ENCODE measurements at regions of chr13 and their contacts with region 1.

Region 1: GRCh38 chr13:110301606-110302553 is 5.1 kb downstream of the COL4A1 start:
- DNase-seq: peak in 1 of 2 donors; percentile 66
- H3K4me3 ChIP-seq: peak overlapping the region; percentile 2 to 84
- H3K27ac ChIP-seq: peak overlapping the region; percentile 95 to 99
- H3K4me1 ChIP-seq: peaks cover 20 to 53% of the 10 kb centered on the region in 2 donors
- H3K27me3 ChIP-seq: no peaks in the 10 kb centered on the region
- CTCF ChIP-seq: no peak

Region 2: GRCh38 chr13:108827636-108828035 is 1474.2 kb before region 1 on chr13:
- intact Hi-C with region 1: no loop called
- DNase-seq: no peak
- H3K4me3 ChIP-seq: no peak overlapping the region
- H3K27ac ChIP-seq: no peak overlapping the region
- H3K4me1 ChIP-seq: no peaks in the 10 kb centered on the region
- H3K27me3 ChIP-seq: no peaks in the 10 kb centered on the region
- CTCF ChIP-seq: no peak

Region 3: GRCh38 chr13:109281017-109281902 is 1020.6 kb before region 1 on chr13:
- intact Hi-C with region 1: no loop called
- DNase-seq: no peak
- H3K4me3 ChIP-seq: no peak overlapping the region
- H3K27ac ChIP-seq: no peak overlapping the region
- H3K4me1 ChIP-seq: no peaks in the 10 kb centered on the region
- H3K27me3 ChIP-seq: no peaks in the 10 kb centered on the region
- CTCF ChIP-seq: no peak

Region 4: DNA sequence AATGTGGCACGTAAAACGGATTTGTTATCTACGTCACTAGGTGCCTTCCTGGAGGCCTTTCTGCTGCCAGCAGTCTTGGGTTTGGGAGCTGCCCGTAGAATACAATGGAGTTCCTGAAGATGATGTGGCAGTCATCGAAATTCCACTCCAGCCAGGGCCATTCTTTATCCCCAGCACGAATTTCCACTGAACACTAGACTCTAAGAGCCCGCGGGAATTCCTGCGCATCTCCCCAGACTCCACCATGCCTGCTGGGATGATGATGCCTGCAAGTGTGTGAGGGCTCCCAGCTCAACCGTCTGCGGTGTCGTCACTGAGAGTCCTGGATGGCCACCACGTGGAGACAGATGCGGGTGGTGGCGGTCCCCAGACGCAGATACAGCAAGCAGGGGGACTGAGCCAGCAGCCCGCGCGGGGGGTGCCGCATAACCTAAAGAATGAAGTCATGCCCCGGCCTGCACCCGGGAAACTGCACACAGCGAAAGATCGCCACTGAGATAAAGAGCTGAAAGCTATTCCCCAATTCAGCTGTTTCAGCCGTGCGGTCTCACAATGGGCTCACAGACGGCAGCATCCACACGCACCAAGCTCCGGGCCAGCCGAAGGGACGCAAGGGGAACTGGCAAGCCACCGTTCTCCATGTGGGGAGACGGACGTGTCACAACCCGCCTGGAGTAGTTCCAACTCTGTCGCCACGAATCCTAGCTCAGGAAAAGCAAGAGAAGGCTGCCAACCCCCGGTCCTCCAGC is 36.0 kb before region 1 on chr13:
- intact Hi-C with region 1: loop called (anchors 5 kb)
- DNase-seq: peak; percentile 41 to 92
- H3K4me3 ChIP-seq: peak overlapping the region; percentile 21 to 23
- H3K27ac ChIP-seq: peak overlapping the region; percentile 75 to 79
- H3K4me1 ChIP-seq: peaks cover 12 to 89% of the 10 kb centered on the region in 2 donors
- H3K27me3 ChIP-seq: no peaks in the 10 kb centered on the region
- CTCF ChIP-seq: no peak

Region 5: GRCh38 chr13:111323950-111324651 is 1022.2 kb after region 1 on chr13:
- intact Hi-C with region 1: no loop called
- DNase-seq: no peak
- H3K4me3 ChIP-seq: no peak overlapping the region
- H3K27ac ChIP-seq: no peak overlapping the region
- H3K4me1 ChIP-seq: no peaks in the 10 kb centered on the region
- H3K27me3 ChIP-seq: no peaks in the 10 kb centered on the region
- CTCF ChIP-seq: no peak